HCT116 (cell line): ENCODE measurements at regions of chr2 and their contacts with region 1.

Region 1: GRCh38 chr2:16034151-16034973 is 94.0 kb downstream of the MYCN start:
- DNase-seq: peak; percentile 13
- ATAC-seq: peak; percentile 95
- H3K4me3 ChIP-seq: no peak overlapping the region
- H3K27ac ChIP-seq: no peak overlapping the region
- H3K4me1 ChIP-seq: no peaks in the 10 kb centered on the region
- H3K27me3 ChIP-seq: peaks cover 21% of the 10 kb centered on the region
- CTCF ChIP-seq: peak in 2 of 3 experiments; percentile 60 to 68; a peak in 4 of 6 replicates
- POLR2A ChIP-seq: no peak
- RAD21 ChIP-seq: no peak

Region 2: GRCh38 chr2:15667809-15668556 is 366.4 kb before region 1 on chr2:
- CTCF ChIA-PET with region 1: no interaction called
- POLR2A ChIA-PET with region 1: no interaction called
- RAD21 ChIA-PET with region 1: no interaction called
- intact Hi-C with region 1: no loop called
- DNase-seq: no peak
- ATAC-seq: no peak
- H3K4me3 ChIP-seq: no peak overlapping the region
- H3K27ac ChIP-seq: no peak overlapping the region
- H3K4me1 ChIP-seq: no peaks in the 10 kb centered on the region
- H3K27me3 ChIP-seq: peaks cover 18% of the 10 kb centered on the region
- CTCF ChIP-seq: no peak
- POLR2A ChIP-seq: no peak
- RAD21 ChIP-seq: no peak

Region 3: DNA sequence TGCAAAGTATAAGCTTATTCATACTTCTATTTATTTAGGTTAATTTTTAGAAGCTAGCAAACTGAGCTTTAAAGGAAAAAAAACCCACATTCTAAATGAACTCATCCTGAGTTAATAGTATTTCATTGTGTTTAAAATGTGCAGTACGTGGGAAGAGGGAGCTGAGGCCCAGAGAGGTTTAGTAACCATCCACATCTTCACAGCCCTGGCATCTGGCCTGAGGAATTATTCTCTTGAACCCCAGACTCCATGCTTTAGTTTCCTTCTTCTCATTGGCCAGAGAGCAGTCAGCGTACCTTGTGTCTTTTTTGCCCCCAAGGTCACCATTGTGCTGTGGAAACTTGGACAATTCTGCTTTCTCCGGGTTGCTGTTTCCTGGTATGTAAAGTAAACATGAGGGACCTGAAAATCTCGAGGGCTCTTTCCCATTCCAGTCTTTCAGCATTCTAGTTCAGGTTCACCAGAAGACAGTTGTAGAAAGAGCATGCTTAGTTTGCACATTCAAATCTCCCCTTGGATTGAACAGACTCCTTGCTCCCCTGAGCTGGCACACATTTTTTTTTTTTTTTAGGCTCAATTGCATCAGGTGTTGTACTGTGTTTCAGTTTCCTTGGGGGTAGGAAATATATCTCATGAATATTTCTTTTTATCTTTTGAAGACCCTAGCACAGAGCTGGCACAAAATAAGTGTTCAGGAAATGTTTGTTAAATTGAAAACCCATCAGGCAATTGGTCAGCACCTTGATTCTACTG is 12.6 kb before region 1 on chr2:
- CTCF ChIA-PET with region 1: interaction called, 14 read pairs
- POLR2A ChIA-PET with region 1: no interaction called
- RAD21 ChIA-PET with region 1: no interaction called
- intact Hi-C with region 1: no loop called
- DNase-seq: no peak
- ATAC-seq: no peak
- H3K4me3 ChIP-seq: no peak overlapping the region
- H3K27ac ChIP-seq: no peak overlapping the region
- H3K4me1 ChIP-seq: no peaks in the 10 kb centered on the region
- H3K27me3 ChIP-seq: peaks cover 59% of the 10 kb centered on the region
- CTCF ChIP-seq: no peak
- POLR2A ChIP-seq: no peak
- RAD21 ChIP-seq: no peak

Region 4: GRCh38 chr2:16462958-16463357 is 428.6 kb after region 1 on chr2:
- CTCF ChIA-PET with region 1: no interaction called
- POLR2A ChIA-PET with region 1: no interaction called
- RAD21 ChIA-PET with region 1: no interaction called
- intact Hi-C with region 1: no loop called
- DNase-seq: no peak
- ATAC-seq: no peak
- H3K4me3 ChIP-seq: no peak overlapping the region
- H3K27ac ChIP-seq: no peak overlapping the region
- H3K4me1 ChIP-seq: no peaks in the 10 kb centered on the region
- H3K27me3 ChIP-seq: peaks cover 5% of the 10 kb centered on the region; the same call in 1 of the 2 replicates
- CTCF ChIP-seq: no peak
- POLR2A ChIP-seq: no peak
- RAD21 ChIP-seq: no peak